CD8-positive, alpha-beta T cell (primary cell): ENCODE measurements at regions of chr1 and their contacts with region 1.

Region 1: GRCh38 chr1:183655562-183656075 is 2.5 kb upstream of the APOBEC4 start:
- DNase-seq: peak; percentile 37 to 83 (median 77)
- ATAC-seq: peak; percentile 84
- H3K4me3 ChIP-seq: no peak overlapping the region
- H3K4me3 Mint-ChIP-seq: no peak overlapping the region
- H3K27ac ChIP-seq: no peak overlapping the region
- H3K27ac Mint-ChIP-seq: no peak overlapping the region
- H3K4me1 ChIP-seq: peaks cover 19% of the 10 kb centered on the region
- H3K4me1 Mint-ChIP-seq: peaks cover 29% of the 10 kb centered on the region
- H3K27me3 ChIP-seq: no peaks in the 10 kb centered on the region
- H3K27me3 Mint-ChIP-seq: no peaks in the 10 kb centered on the region
- CTCF ChIP-seq: peak; percentile 85

Region 2: DNA sequence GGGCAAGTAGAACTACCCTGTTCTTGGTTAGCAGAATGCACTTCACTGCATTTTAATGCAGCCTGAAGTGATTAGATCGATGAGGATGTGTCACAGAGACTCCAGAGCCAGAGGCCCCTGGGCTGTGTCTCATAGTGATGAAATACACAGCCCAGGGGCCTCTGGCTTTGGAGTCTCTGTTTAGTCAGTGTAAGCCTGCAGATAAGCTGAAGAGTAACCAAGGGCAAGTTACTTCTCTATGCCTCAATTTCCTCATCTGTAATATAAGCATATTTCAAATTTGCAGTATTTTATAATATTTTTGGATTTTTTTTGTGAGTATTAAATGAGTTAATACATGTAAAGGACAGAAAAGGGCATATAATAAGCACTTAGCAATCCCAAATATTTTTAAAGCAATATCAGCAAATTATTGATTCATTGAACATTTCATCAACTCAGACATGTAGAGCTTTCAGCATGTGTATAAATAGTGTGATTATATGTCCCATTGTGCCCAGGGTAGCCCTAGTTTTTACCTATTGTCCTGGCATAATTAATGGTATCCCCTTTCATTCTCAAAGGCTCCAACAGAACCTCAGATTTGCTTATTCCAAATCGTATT is 21.1 kb after region 1 on chr1:
- CTCF ChIA-PET with region 1: interaction called, 10 read pairs
- POLR2A ChIA-PET with region 1: no interaction called
- intact Hi-C with region 1: no loop called
- DNase-seq: no peak
- ATAC-seq: no peak
- H3K4me3 ChIP-seq: no peak overlapping the region
- H3K4me3 Mint-ChIP-seq: no peak overlapping the region
- H3K27ac ChIP-seq: no peak overlapping the region
- H3K27ac Mint-ChIP-seq: no peak overlapping the region
- H3K4me1 ChIP-seq: no peaks in the 10 kb centered on the region
- H3K4me1 Mint-ChIP-seq: no peaks in the 10 kb centered on the region
- H3K27me3 ChIP-seq: no peaks in the 10 kb centered on the region
- H3K27me3 Mint-ChIP-seq: peaks cover 5% of the 10 kb centered on the region
- CTCF ChIP-seq: no peak

Region 3: GRCh38 chr1:183720028-183720427 is 64.4 kb after region 1 on chr1:
- CTCF ChIA-PET with region 1: no interaction called
- POLR2A ChIA-PET with region 1: no interaction called
- intact Hi-C with region 1: no loop called
- DNase-seq: no peak
- ATAC-seq: no peak
- H3K4me3 ChIP-seq: no peak overlapping the region
- H3K4me3 Mint-ChIP-seq: no peak overlapping the region
- H3K27ac ChIP-seq: no peak overlapping the region
- H3K27ac Mint-ChIP-seq: no peak overlapping the region
- H3K4me1 ChIP-seq: no peaks in the 10 kb centered on the region
- H3K4me1 Mint-ChIP-seq: no peaks in the 10 kb centered on the region
- H3K27me3 ChIP-seq: no peaks in the 10 kb centered on the region
- H3K27me3 Mint-ChIP-seq: no peaks in the 10 kb centered on the region
- CTCF ChIP-seq: no peak

Region 4: GRCh38 chr1:183922197-183922596 is 266.6 kb after region 1 on chr1:
- CTCF ChIA-PET with region 1: interaction called, 172 read pairs
- POLR2A ChIA-PET with region 1: no interaction called
- intact Hi-C with region 1: no loop called
- DNase-seq: no peak
- ATAC-seq: no peak
- H3K4me3 ChIP-seq: no peak overlapping the region
- H3K4me3 Mint-ChIP-seq: no peak overlapping the region
- H3K27ac ChIP-seq: no peak overlapping the region
- H3K27ac Mint-ChIP-seq: no peak overlapping the region
- H3K4me1 ChIP-seq: no peaks in the 10 kb centered on the region
- H3K4me1 Mint-ChIP-seq: no peaks in the 10 kb centered on the region
- H3K27me3 ChIP-seq: no peaks in the 10 kb centered on the region
- H3K27me3 Mint-ChIP-seq: no peaks in the 10 kb centered on the region
- CTCF ChIP-seq: no peak

Region 5: GRCh38 chr1:184222652-184223052 is 567.0 kb after region 1 on chr1:
- CTCF ChIA-PET with region 1: interaction called, 8 read pairs
- POLR2A ChIA-PET with region 1: no interaction called
- intact Hi-C with region 1: loop called (anchors 1 to 2 kb)
- DNase-seq: peak in 7 of 9 experiments; percentile 16 to 57 (median 49)
- ATAC-seq: no peak
- H3K4me3 ChIP-seq: no peak overlapping the region
- H3K4me3 Mint-ChIP-seq: no peak overlapping the region
- H3K27ac ChIP-seq: no peak overlapping the region
- H3K27ac Mint-ChIP-seq: no peak overlapping the region
- H3K4me1 ChIP-seq: no peaks in the 10 kb centered on the region
- H3K4me1 Mint-ChIP-seq: no peaks in the 10 kb centered on the region
- H3K27me3 ChIP-seq: no peaks in the 10 kb centered on the region
- H3K27me3 Mint-ChIP-seq: peaks cover 6% of the 10 kb centered on the region
- CTCF ChIP-seq: peak; percentile 85